HAP-1 (cell line): ENCODE measurements at regions of chr1 and their contacts with region 1.

Region 1: DNA sequence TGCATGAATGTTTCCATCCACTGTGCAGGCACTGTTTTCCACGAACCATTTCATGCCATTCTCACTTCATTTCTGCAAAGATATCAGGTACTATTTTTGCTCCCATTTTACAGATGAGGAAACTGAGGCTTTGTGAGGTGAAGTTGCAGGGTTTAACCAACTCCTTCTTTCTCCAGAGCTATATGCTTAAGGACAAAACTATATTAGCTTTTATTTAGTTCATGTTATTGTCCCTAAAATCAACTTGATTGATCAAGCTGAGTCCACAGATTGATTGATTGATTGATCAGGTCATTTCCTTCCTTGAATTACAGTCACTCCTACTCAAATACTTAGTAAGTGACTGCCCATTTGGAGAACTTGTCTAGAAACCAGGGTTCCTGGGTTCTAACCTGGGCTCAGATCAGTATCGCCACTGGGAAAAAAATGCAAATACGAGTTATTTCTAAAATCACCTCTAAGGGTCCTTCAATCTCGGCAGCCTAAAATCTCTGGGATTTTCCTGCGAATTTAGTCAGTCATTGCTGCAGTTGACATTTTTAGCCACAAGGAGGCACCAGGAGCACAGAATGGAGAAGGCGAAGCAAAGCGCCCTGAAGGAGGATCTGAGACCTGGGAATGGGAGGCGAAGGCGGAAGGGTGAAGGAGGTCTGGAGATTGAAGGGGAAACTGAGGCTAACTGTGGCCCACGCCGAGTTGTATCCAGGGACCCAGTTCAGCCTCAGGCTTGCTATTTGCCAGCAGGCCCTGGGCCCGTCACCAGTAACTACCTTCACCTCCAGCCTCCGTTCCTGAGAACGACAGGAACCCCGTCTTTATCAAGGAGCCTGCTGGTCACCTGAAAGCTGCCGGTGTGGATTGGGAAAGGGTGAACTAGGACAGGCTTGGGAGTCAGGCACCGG is 14.3 kb upstream of the MUL1 start:
- DNase-seq: peak; percentile 64 to 93
- H3K4me3 ChIP-seq: no peak overlapping the region
- H3K4me1 ChIP-seq: no peaks in the 10 kb centered on the region
- H3K27me3 ChIP-seq: peaks cover 13% of the 10 kb centered on the region; the same call in 1 of the 2 replicates

Region 2: DNA sequence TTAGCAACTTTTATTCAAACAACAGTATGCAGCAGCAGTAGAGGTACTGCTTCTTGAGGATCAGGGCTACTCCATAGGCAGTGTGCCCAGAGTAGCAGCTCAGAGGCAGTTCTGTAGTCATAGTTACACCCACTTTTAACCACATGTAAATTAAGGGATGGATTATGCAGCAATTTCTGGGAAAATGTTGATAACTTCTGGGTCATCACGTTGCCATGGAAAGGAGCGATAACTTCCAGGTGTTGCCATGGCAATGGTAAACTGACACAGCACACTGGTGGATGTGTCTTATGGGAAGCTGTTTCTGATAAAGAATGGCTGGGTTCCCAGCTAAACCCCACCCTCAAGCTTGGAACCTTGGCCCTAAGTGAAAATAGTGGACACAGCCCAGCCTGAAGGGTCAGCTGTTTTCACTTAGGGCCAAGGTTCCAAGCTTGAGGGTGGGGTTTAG is 513.8 kb before region 1 on chr1:
- in situ Hi-C with region 1: no loop called
- DNase-seq: no peak
- H3K4me3 ChIP-seq: no peak overlapping the region
- H3K4me1 ChIP-seq: no peaks in the 10 kb centered on the region
- H3K27me3 ChIP-seq: no peaks in the 10 kb centered on the region

Region 3: DNA sequence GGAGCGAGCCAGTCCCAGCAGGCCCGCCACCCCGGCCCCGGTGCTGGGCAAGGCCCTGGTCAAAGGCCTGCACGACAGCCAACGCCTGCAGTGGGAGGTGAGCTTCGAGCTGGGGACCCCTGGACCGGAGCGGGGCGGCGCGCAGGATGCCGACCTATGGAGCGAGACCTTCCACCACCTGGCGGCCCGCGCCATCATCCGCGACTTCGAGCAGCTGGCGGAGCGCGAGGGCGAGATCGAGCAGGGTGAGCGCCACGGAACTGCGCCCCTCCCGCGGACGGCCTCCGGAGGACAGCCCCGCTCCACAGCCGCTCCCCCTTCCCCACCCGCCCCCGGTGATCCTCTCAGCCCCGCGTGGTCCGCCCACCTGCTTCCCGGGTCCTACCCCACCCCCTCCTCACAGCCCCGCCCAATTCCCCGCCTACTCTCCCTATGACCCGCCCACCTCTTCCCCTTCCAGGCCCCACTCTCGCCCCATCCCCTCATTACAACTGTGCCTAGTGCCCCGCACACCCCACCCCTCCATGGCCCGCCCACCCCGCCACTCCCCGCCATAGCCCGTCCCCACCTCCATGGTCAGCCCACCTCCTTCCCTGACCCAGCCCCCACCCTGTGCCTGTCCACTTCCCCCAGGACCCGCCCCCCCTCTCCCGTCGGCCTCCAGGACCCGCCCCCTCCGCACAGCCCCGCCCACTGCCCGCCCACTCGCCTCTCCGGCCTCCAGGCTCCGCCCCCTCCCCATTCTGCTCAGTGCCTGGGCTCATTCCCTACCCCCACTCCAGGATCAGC is 178.9 kb before region 1 on chr1:
- in situ Hi-C with region 1: no loop called
- DNase-seq: peak in 1 of 2 experiments; percentile 55
- H3K4me3 ChIP-seq: no peak overlapping the region
- H3K4me1 ChIP-seq: no peaks in the 10 kb centered on the region
- H3K27me3 ChIP-seq: 0 out of 2 replicates have a peak, but pooled peaks cover 7% of the 10 kb centered on the region

Region 4: DNA sequence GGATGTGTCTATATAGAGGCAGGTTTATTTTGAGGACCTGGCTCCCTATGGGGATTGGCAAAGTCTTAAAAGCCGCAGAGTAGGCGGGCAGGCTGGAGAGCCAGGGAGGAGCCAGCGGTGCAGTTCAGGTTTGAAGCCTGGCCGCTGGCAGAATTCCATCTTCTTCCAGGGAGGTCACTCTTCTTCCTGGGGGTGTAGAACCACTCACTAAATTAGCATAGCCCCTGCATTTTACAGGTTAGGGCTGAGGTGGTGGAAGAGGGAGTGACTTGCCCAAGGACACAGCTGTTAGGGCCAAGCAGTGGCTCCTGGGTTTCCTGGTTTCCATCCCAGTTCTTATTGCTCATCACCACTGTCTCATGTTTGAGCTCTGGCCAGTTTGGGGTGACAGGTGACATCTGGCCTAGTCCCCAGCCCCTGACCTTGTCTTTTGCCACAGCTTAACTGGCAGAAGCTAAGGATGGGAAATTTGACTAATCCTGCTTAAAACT is 112.4 kb after region 1 on chr1:
- in situ Hi-C with region 1: loop called (anchors 5 kb)
- DNase-seq: peak; percentile 64 to 77
- H3K4me3 ChIP-seq: peak overlapping the region; percentile 48
- H3K4me1 ChIP-seq: peaks cover 19% of the 10 kb centered on the region
- H3K27me3 ChIP-seq: no peaks in the 10 kb centered on the region